HepG2 (cell line): ENCODE measurements at regions of chr19 and their contacts with region 1.

Region 1: DNA sequence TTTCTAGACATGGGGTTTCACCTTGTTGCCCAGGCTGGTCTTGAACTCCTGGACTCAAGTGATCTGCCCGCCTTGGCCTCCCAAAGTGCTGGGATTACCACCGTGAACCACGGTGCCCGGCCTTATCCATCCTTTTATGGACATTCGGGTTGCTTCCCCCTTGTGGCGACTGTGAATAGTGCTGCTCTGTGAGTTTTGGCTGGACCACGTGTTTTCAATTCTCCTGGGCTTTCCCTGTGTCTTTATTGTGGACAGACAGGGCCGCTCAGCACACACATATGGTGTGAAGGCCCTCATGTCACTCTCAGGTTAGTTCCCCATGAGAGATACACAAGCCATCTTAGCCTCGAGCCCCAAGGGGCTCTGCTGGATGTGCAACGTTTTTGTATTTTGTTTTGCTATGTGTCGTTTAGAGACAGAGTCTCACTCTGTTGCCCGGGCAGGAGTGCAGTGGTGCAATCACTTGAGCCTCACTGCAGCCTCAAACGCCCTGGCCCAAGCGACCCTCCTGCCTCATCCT is 40.5 kb downstream of the MAU2 start:
- DNase-seq: peak; percentile 83
- ATAC-seq: peak; percentile 85
- H3K4me3 ChIP-seq: no peak overlapping the region
- H3K27ac ChIP-seq: peak overlapping the region; percentile 21
- H3K4me1 ChIP-seq: peaks cover 29% of the 10 kb centered on the region
- H3K27me3 ChIP-seq: no peaks in the 10 kb centered on the region
- CTCF ChIP-seq: peak; percentile 86
- EP300 ChIP-seq: no peak
- POLR2A ChIP-seq: no peak
- RAD21 ChIP-seq: peak; percentile 39; the same call in 1 of the 2 replicates

Region 2: GRCh38 chr19:19372656-19373416 is 11.7 kb after region 1 on chr19:
- CTCF ChIA-PET with region 1: no interaction called
- POLR2A ChIA-PET with region 1: interaction called, 20 read pairs
- in situ Hi-C with region 1: no loop called
- intact Hi-C with region 1: no loop called
- DNase-seq: peak; percentile 90
- ATAC-seq: peak; percentile 96
- H3K4me3 ChIP-seq: peak overlapping the region; percentile 19 to 48 (median 37); a peak in 5 of 6 replicates
- H3K27ac ChIP-seq: peak overlapping the region; percentile 63
- H3K4me1 ChIP-seq: peaks cover 66% of the 10 kb centered on the region
- H3K27me3 ChIP-seq: no peaks in the 10 kb centered on the region
- CTCF ChIP-seq: no peak
- EP300 ChIP-seq: peak in 1 of 2 experiments; percentile 44; a peak in 1 of 4 replicates
- POLR2A ChIP-seq: peak; percentile 39 to 74; a peak in 2 of 4 replicates
- RAD21 ChIP-seq: no peak

Region 3: GRCh38 chr19:19488875-19489690 is 127.9 kb after region 1 on chr19:
- CTCF ChIA-PET with region 1: interaction called, 33 read pairs
- POLR2A ChIA-PET with region 1: interaction called, 19 read pairs
- in situ Hi-C with region 1: loop called (anchors 5 kb)
- intact Hi-C with region 1: loop called (anchors 1 kb)
- DNase-seq: peak; percentile 60
- ATAC-seq: peak; percentile 25
- H3K4me3 ChIP-seq: no peak overlapping the region
- H3K27ac ChIP-seq: peak overlapping the region; percentile 16
- H3K4me1 ChIP-seq: peaks cover 47% of the 10 kb centered on the region
- H3K27me3 ChIP-seq: no peaks in the 10 kb centered on the region; a peak in 1 of 5 replicates
- CTCF ChIP-seq: no peak
- EP300 ChIP-seq: no peak
- POLR2A ChIP-seq: no peak
- RAD21 ChIP-seq: no peak